Activated CD8-positive, alpha-beta T cell treated with anti-CD3 and anti-CD28 coated beads for 36 hours (primary cell): ENCODE measurements at regions of chr11 and their contacts with region 1.

Region 1: DNA sequence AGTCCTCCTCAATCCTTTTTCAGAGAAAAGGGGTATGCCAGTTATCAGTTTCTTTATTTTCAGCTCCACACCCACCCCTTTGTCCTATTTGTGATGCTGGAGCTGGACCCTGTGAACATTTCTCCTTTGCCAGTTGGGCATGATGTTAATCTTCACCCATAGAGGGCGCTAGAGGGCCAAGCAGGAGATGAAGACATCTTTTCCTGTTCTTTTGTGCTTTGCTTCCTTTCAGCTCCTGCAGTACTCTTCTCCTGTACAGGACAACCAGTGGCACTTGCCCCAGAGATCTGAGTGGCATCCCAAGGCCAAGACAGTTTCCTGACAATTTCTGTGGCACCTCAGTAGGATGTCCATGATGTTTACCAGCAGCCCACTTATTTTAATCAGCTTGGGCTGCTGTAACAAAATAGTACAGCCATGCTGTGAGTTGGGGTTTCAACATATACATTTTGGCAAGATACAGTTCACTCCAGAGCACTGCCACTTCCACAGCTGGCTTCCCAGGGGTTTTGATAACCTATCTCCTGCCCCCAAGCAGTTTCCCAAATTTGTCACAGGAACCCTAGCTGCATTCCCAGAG is 4.6 kb downstream of the SAA2 start:
- DNase-seq: peak; percentile 74
- ATAC-seq: no peak
- H3K4me3 Mint-ChIP-seq: no peak overlapping the region
- H3K27ac Mint-ChIP-seq: no peak overlapping the region
- H3K4me1 Mint-ChIP-seq: peaks cover 8% of the 10 kb centered on the region
- H3K27me3 Mint-ChIP-seq: peaks cover 11% of the 10 kb centered on the region
- CTCF ChIP-seq: peak; percentile 91

Region 2: DNA sequence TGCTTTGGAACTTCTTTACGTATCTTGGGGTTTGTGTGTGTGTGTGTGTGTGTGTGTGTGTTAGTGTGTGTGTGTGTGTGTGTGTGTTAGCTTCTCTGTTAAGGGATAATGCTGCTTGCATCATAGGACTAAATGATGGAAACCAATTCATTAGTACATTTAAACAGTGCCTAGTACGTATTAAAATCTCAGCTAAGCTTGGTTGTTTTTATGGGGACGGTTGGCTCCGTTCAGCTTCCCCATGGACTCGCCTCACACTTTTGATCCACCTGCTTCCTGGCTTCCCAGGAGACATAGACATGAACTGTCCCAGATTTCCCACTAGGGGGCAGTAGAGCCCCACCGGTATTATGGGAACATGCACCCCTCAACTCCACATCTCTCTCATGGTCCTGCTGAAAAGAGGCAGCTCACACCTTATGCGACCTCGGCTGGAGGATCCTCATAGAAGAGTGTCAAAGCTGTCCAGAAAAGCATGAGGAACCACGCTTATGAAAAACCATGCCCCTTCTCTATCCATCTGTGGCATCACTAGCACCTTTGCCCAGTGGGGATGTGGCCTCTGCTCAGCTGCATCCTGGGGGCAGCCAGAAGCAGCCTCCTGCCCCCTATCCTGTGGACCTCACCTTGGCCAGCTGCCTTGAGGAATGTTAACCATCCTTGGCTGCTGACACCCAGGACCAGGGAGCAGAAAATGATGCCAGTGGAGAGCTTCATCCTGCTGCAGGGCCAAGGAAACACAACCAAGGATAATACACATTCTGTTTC is 128.3 kb before region 1 on chr11:
- CTCF ChIA-PET with region 1: interaction called, 13 read pairs
- POLR2A ChIA-PET with region 1: no interaction called
- intact Hi-C with region 1: no loop called
- DNase-seq: peak; percentile 72
- ATAC-seq: peak; percentile 91
- H3K4me3 Mint-ChIP-seq: no peak overlapping the region
- H3K27ac Mint-ChIP-seq: no peak overlapping the region
- H3K4me1 Mint-ChIP-seq: no peaks in the 10 kb centered on the region
- H3K27me3 Mint-ChIP-seq: peaks cover 7% of the 10 kb centered on the region
- CTCF ChIP-seq: peak; percentile 84

Region 3: DNA sequence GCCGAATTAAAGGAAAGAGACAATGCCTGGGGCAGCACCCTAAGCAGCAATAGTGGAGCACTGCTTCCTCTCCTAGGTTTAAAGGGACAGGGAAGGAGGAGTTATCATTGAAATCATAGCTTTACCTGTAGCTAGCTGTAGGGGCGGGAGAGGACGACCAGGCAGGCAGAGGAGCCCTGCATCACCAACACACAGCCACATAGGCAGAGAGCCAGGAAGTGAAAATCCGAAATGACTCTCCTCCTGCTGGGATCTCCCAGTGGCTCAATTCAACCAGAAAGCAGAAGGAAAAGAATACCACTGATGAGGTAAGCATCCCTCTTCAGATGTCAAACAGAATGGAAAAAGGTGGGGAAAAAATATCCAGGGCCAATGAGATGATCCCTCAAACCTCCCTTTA is 50.9 kb before region 1 on chr11:
- CTCF ChIA-PET with region 1: no interaction called
- POLR2A ChIA-PET with region 1: no interaction called
- intact Hi-C with region 1: no loop called
- DNase-seq: no peak
- ATAC-seq: no peak
- H3K4me3 Mint-ChIP-seq: no peak overlapping the region
- H3K27ac Mint-ChIP-seq: no peak overlapping the region
- H3K4me1 Mint-ChIP-seq: no peaks in the 10 kb centered on the region
- H3K27me3 Mint-ChIP-seq: peaks cover 11% of the 10 kb centered on the region
- CTCF ChIP-seq: no peak

Region 4: GRCh38 chr11:18229501-18229900 is 14.4 kb before region 1 on chr11:
- CTCF ChIA-PET with region 1: interaction called, 14 read pairs
- POLR2A ChIA-PET with region 1: interaction called, 3 read pairs
- intact Hi-C with region 1: no loop called
- DNase-seq: no peak
- ATAC-seq: no peak
- H3K4me3 Mint-ChIP-seq: no peak overlapping the region
- H3K27ac Mint-ChIP-seq: no peak overlapping the region
- H3K4me1 Mint-ChIP-seq: no peaks in the 10 kb centered on the region
- H3K27me3 Mint-ChIP-seq: peaks cover 7% of the 10 kb centered on the region
- CTCF ChIP-seq: no peak

Region 5: GRCh38 chr11:18288911-18289310 is 45.0 kb after region 1 on chr11:
- CTCF ChIA-PET with region 1: interaction called, 18 read pairs
- POLR2A ChIA-PET with region 1: no interaction called
- intact Hi-C with region 1: no loop called
- DNase-seq: no peak
- ATAC-seq: no peak
- H3K4me3 Mint-ChIP-seq: no peak overlapping the region
- H3K27ac Mint-ChIP-seq: no peak overlapping the region
- H3K4me1 Mint-ChIP-seq: no peaks in the 10 kb centered on the region
- H3K27me3 Mint-ChIP-seq: no peaks in the 10 kb centered on the region
- CTCF ChIP-seq: no peak

Region 6: GRCh38 chr11:18294862-18295261 is 51.0 kb after region 1 on chr11:
- CTCF ChIA-PET with region 1: interaction called, 18 read pairs
- POLR2A ChIA-PET with region 1: no interaction called
- intact Hi-C with region 1: no loop called
- DNase-seq: no peak
- ATAC-seq: peak; percentile 24
- H3K4me3 Mint-ChIP-seq: no peak overlapping the region
- H3K27ac Mint-ChIP-seq: no peak overlapping the region
- H3K4me1 Mint-ChIP-seq: no peaks in the 10 kb centered on the region
- H3K27me3 Mint-ChIP-seq: no peaks in the 10 kb centered on the region
- CTCF ChIP-seq: no peak

Region 7: GRCh38 chr11:18310800-18311340 is 67.0 kb after region 1 on chr11:
- CTCF ChIA-PET with region 1: interaction called, 10 read pairs
- POLR2A ChIA-PET with region 1: no interaction called
- intact Hi-C with region 1: no loop called
- DNase-seq: no peak
- ATAC-seq: no peak
- H3K4me3 Mint-ChIP-seq: no peak overlapping the region
- H3K27ac Mint-ChIP-seq: no peak overlapping the region
- H3K4me1 Mint-ChIP-seq: peaks cover 4% of the 10 kb centered on the region
- H3K27me3 Mint-ChIP-seq: no peaks in the 10 kb centered on the region
- CTCF ChIP-seq: no peak